Astrocyte of the cerebellum (primary cell): ENCODE measurements at regions of chr3 and their contacts with region 1.

Region 1: GRCh38 chr3:13788522-13789432 is 91.1 kb downstream of the WNT7A start:
- DNase-seq: no peak
- H3K4me3 ChIP-seq: no peak overlapping the region
- CTCF ChIP-seq: no peak

Region 2: GRCh38 chr3:13831386-13831996 is 42.7 kb after region 1 on chr3:
- in situ Hi-C with region 1: loop called (anchors 5 kb)
- DNase-seq: no peak
- H3K4me3 ChIP-seq: no peak overlapping the region
- CTCF ChIP-seq: no peak